ENCODE measurements at regions of chr6 and their contacts with region 1.

Region 1: GRCh38 chr6:70107852-70108629 is 194.8 kb downstream of the COL9A1 start:
- DNase-seq: peak; percentile 72
- H3K4me3 ChIP-seq: no peak overlapping the region
- H3K27ac ChIP-seq: no peak overlapping the region
- H3K4me1 ChIP-seq: peaks cover 9% of the 10 kb centered on the region
- H3K27me3 ChIP-seq: no peaks in the 10 kb centered on the region
- CTCF ChIP-seq: peak; percentile 81

Region 2: GRCh38 chr6:69732640-69733039 is 375.4 kb before region 1 on chr6:
- CTCF ChIA-PET with region 1: no interaction called
- POLR2A ChIA-PET with region 1: no interaction called
- intact Hi-C with region 1: loop called (anchors 2 kb)
- DNase-seq: peak; percentile 45
- H3K4me3 ChIP-seq: no peak overlapping the region
- H3K27ac ChIP-seq: no peak overlapping the region
- H3K4me1 ChIP-seq: no peaks in the 10 kb centered on the region
- H3K27me3 ChIP-seq: no peaks in the 10 kb centered on the region
- CTCF ChIP-seq: peak; percentile 59

Region 3: DNA sequence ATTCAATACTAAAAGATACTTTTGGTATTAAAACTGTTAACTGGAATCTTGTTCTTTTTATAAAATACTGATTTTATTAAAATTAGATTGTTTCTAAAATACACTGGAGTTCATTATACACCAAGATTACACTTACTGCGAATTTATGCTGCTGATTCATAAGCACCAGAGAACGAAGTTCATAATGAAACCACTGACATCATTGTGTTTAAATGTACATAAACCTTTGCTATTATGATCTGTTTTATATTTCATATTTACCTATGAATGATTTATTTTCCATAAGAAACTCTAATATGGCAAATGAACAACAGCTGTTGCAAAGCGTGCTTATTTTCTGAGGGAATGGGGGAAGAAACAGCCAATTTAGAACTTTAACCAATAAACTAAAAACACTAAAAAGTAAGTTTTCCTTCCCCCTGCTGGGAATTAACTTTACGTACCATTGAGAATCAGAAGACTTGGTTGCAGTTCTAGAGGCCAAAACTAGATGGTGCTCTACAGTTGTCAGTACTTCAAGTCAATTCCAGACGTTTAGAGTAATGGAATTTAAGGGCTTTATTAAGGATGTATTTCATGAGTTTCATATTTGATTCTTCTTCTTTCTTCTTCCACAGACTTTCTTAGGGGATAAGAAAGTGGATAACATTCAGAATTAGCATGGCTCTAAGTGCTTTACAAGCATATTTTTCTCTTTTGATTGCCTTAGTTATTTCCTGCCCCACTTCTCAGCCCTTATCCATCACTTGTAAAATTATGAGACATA is 272.4 kb before region 1 on chr6:
- CTCF ChIA-PET with region 1: no interaction called
- POLR2A ChIA-PET with region 1: no interaction called
- intact Hi-C with region 1: loop called (anchors 5 kb)
- DNase-seq: peak; percentile 73
- H3K4me3 ChIP-seq: peak overlapping the region; percentile 14
- H3K27ac ChIP-seq: no peak overlapping the region
- H3K4me1 ChIP-seq: no peaks in the 10 kb centered on the region
- H3K27me3 ChIP-seq: no peaks in the 10 kb centered on the region
- CTCF ChIP-seq: peak; percentile 85